ENCODE measurements at regions of chr20 and their contacts with region 1.

Region 1: DNA sequence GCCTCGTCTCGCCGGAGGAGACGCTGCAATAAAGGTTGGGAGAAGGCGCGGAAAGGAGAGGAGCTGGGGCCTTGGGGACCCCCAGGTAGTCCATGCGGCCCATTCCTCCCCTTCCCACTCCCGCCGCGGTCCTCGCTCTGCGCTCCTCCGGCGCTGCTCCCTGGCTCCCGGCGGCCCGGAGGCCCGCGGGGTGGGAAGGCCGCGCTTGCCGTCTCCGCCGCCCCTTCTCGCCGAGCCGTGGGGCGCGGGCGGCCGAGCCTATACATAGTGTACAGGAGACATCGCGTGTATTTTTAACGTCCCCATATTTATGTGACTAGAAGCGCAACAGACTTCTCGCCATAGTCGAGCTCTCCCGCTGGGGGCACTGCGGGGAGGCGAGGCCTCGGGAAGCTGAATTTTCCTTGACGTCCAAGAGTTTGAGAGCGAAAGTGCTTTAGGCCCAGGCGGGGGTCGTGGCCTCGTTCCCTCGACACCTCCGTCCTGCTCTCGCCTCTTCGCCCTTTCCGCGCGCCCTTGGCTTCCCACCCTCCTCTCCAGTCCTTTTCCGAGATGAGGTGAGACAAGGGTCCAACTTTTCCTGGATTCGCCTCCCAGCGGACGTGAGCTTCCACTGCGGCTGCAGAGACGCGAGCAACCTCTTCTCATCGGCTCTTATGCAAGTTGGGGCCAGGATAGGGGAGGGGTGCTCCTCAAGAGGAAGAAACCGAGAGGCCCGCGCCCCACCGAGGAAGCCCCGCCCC is 29.0 kb downstream of the SLC12A5 start:
- DNase-seq: no peak
- H3K4me3 ChIP-seq: peak overlapping the region; percentile 8 to 57 (median 36); a peak in 7 of 8 replicates
- H3K27ac ChIP-seq: no peak overlapping the region
- H3K4me1 ChIP-seq: peaks cover 0 to 14% (median 12%) of the 10 kb centered on the region in 4 experiments; a peak in 6 of 7 replicates
- H3K27me3 ChIP-seq: peaks cover 4 to 49% (median 34%) of the 10 kb centered on the region in 4 experiments
- CTCF ChIP-seq: peak; percentile 47 to 64 (median 57)
- EP300 ChIP-seq: no peak
- POLR2A ChIP-seq: no peak
- RAD21 ChIP-seq: peak; percentile 18 to 42; a peak in 3 of 4 replicates

Region 2: GRCh38 chr20:45946149-45946970 is 111.7 kb before region 1 on chr20:
- CTCF ChIA-PET with region 1: no interaction called
- POLR2A ChIA-PET with region 1: no interaction called
- DNase-seq: no peak
- H3K4me3 ChIP-seq: no peak overlapping the region
- H3K27ac ChIP-seq: no peak overlapping the region
- H3K4me1 ChIP-seq: no peaks in the 10 kb centered on the region
- H3K27me3 ChIP-seq: no peaks in the 10 kb centered on the region; a peak in 1 of 7 replicates
- CTCF ChIP-seq: no peak
- EP300 ChIP-seq: no peak
- POLR2A ChIP-seq: no peak
- RAD21 ChIP-seq: no peak

Region 3: DNA sequence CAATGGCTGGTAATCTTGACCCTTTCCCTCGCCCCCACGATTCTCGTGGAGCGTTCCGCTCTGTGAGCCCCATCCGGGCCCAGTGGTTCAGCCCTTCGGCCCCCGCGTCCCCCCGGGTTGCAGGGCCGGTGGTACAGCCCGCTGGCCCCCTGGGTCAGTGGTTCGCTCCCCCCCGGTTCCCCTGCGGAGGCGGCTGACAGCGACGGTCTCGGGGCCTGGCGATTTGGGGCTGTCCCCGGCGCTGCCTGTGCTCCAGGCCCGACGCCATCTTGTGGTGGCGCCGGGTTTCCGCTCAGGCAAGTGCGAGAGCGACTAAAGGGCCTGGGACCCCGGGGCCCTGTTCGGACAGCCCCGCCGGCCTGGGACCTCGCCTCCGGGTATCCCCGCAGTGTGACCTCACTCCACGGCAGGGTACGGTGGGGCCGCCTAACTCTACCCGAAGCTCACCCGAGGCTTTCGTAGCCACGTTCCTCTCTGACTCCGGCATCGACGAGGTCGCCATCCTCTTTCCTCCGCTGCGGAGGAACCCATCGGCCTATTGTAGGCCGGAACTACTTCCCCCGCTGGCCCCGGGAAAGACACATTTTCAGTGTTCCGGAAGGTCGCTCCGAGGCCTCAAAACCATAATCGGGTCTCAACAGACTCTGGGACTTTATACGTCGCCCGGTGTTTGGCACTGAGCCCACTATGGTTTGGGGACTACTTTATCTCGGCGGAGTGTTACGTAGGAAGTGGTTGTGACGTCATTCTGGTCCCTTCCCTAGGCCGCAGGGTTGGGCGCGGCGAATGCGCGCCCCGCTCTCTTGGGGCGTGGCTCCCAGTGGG is 86.1 kb before region 1 on chr20 and contains the start of gene ZNF335:
- CTCF ChIA-PET with region 1: interaction called, 10 read pairs
- POLR2A ChIA-PET with region 1: no interaction called
- DNase-seq: peak; percentile 88 to 96
- H3K4me3 ChIP-seq: peak within 1 kb of the TSS; percentile 67 to 99 (median 82)
- H3K27ac ChIP-seq: peak within 1 kb of the TSS; percentile 100
- H3K4me1 ChIP-seq: peaks cover 0 to 8% (median 2%) of the 10 kb centered on the region in 4 experiments; a peak in 4 of 7 replicates
- H3K27me3 ChIP-seq: no peaks in the 10 kb centered on the region
- CTCF ChIP-seq: peak in 1 of 3 experiments; percentile 18; a peak in 1 of 4 replicates
- EP300 ChIP-seq: peak in 1 of 2 experiments; percentile 99; a peak in 2 of 3 replicates
- POLR2A ChIP-seq: peak in 1 of 2 experiments; percentile 88; a peak in 2 of 3 replicates
- RAD21 ChIP-seq: no peak
- total RNA-seq, gene ZNF335: 14.6 and 15.9 TPM in 2 replicates

Region 4: GRCh38 chr20:46004889-46005473 is 53.0 kb before region 1 on chr20:
- CTCF ChIA-PET with region 1: no interaction called
- POLR2A ChIA-PET with region 1: no interaction called
- DNase-seq: no peak
- H3K4me3 ChIP-seq: peak overlapping the region in 1 of 4 experiments; percentile 4; a peak in 2 of 8 replicates
- H3K27ac ChIP-seq: no peak overlapping the region
- H3K4me1 ChIP-seq: peaks cover 12 to 34% (median 17%) of the 10 kb centered on the region in 4 experiments
- H3K27me3 ChIP-seq: no peaks in the 10 kb centered on the region
- CTCF ChIP-seq: no peak
- EP300 ChIP-seq: no peak
- POLR2A ChIP-seq: no peak
- RAD21 ChIP-seq: no peak

Region 5: DNA sequence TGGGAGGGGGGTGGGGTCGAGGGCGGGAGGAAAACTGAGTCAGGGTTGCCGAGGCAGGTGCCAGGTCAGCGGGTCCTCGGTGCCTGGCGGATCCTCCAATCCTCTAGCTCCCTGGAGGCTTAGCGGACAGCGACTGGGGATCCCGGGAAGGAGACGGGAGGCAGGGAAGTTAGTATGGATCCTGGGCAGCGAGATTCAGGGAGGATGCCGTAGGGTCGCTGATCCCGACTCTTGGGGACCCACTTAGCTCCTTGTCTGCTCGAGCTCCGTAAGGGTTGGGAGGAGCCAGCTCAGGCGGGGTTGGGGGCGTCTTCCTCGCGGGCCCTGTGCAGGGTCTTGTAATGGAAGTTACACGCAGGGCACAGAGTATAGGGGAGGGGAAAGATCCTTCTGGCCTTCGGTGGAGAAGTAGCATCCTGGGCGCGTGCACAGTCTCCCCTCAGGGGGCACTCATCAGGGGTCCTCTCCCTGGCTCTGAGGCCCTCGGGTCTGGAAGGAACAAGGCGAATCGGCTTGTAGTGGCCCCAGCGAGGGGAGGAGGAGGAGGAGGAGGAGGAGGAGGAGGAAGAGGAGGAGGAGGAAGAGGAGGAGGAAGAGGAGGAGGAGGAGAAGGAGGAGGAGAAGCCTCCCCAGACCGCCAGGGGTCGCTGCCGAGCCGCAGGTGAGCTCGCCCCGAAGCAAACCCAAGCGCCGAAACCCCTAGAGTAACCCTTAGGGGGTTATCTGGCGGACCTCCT is 35.4 kb before region 1 on chr20:
- CTCF ChIA-PET with region 1: interaction called, 60 read pairs
- POLR2A ChIA-PET with region 1: interaction called, 4 read pairs
- DNase-seq: peak in 1 of 2 experiments; percentile 92
- H3K4me3 ChIP-seq: peak overlapping the region; percentile 51 to 81 (median 71)
- H3K27ac ChIP-seq: no peak overlapping the region
- H3K4me1 ChIP-seq: no peaks in the 10 kb centered on the region; a peak in 1 of 7 replicates
- H3K27me3 ChIP-seq: peaks cover 2 to 45% (median 15%) of the 10 kb centered on the region in 4 experiments
- CTCF ChIP-seq: peak; percentile 75 to 78 (median 76)
- EP300 ChIP-seq: no peak
- POLR2A ChIP-seq: no peak
- RAD21 ChIP-seq: peak; percentile 75 to 82

Region 6: DNA sequence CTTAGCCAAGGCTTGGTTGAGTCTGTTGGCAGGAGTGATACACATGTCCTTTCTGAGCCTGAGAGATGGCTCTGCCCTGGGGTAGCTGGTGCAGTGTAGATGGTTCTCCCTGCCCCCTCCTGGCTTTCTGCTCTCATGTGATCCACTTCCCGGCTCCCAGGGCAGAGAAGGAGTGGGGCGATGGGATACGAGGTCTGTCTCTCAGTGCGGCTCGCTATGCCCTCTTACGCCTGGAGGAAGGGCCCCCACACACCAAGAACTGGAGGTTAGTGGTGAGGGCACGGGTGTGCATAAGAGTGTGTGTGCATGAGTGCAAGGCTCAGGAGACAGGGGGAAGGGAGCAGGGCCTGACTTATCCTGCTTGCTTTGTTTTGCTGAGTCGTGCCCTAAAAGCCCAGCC is 10.2 kb before region 1 on chr20:
- CTCF ChIA-PET with region 1: interaction called, 20 read pairs
- POLR2A ChIA-PET with region 1: interaction called, 3 read pairs
- DNase-seq: no peak
- H3K4me3 ChIP-seq: no peak overlapping the region
- H3K27ac ChIP-seq: no peak overlapping the region
- H3K4me1 ChIP-seq: 0 out of 7 replicates have a peak, but pooled peaks cover 0 to 3% (median 0%) of the 10 kb centered on the region in 4 experiments
- H3K27me3 ChIP-seq: peaks cover 0 to 6% (median under 1%) of the 10 kb centered on the region in 4 experiments; a peak in 3 of 7 replicates
- CTCF ChIP-seq: no peak
- EP300 ChIP-seq: no peak
- POLR2A ChIP-seq: no peak
- RAD21 ChIP-seq: no peak

Region 7: GRCh38 chr20:46089417-46090388 is 31.7 kb after region 1 on chr20 and contains the start of gene NCOA5:
- CTCF ChIA-PET with region 1: interaction called, 5 read pairs
- POLR2A ChIA-PET with region 1: interaction called, 19 read pairs
- DNase-seq: peak; percentile 80 to 92
- H3K4me3 ChIP-seq: peak within 1 kb of the TSS; percentile 78 to 97 (median 84)
- H3K27ac ChIP-seq: peak within 1 kb of the TSS; percentile 99
- H3K4me1 ChIP-seq: peaks cover 0 to 6% (median 2%) of the 10 kb centered on the region in 4 experiments; a peak in 4 of 7 replicates
- H3K27me3 ChIP-seq: no peaks in the 10 kb centered on the region
- CTCF ChIP-seq: peak; percentile 7 to 29 (median 11); a peak in 3 of 4 replicates
- EP300 ChIP-seq: no peak
- POLR2A ChIP-seq: peak; percentile 94 to 95; a peak in 2 of 3 replicates
- RAD21 ChIP-seq: peak; percentile 5 to 35; a peak in 3 of 4 replicates
- total RNA-seq, gene NCOA5: 29.0 and 29.9 TPM in 2 replicates

Region 8: GRCh38 chr20:46117704-46118467 is 59.9 kb after region 1 on chr20 and contains the start of gene CD40:
- CTCF ChIA-PET with region 1: no interaction called
- POLR2A ChIA-PET with region 1: no interaction called
- DNase-seq: peak; percentile 51 to 95
- H3K4me3 ChIP-seq: peak within 1 kb of the TSS; percentile 53 to 72 (median 64)
- H3K27ac ChIP-seq: no peak within 1 kb of the TSS
- H3K4me1 ChIP-seq: peaks cover 0 to 3% (median 0%) of the 10 kb centered on the region in 4 experiments; a peak in 2 of 7 replicates
- H3K27me3 ChIP-seq: peaks cover 0 to 25% (median 9%) of the 10 kb centered on the region in 4 experiments; a peak in 5 of 7 replicates
- CTCF ChIP-seq: no peak
- EP300 ChIP-seq: no peak
- POLR2A ChIP-seq: peak in 1 of 2 experiments; percentile 78; a peak in 2 of 3 replicates
- RAD21 ChIP-seq: no peak
- total RNA-seq, gene CD40: 12.1 and 14.5 TPM in 2 replicates

Measured in H1 (cell line).